ENCODE measurements at regions of chr5 and their contacts with region 1.

Region 1: GRCh38 chr5:135426102-135427082 is 20.8 kb downstream of the DCANP1 start:
- DNase-seq: no peak
- ATAC-seq: peak; percentile 89
- H3K4me3 Mint-ChIP-seq: no peak overlapping the region
- H3K27ac Mint-ChIP-seq: no peak overlapping the region
- H3K4me1 Mint-ChIP-seq: no peaks in the 10 kb centered on the region
- H3K27me3 Mint-ChIP-seq: peaks cover 24% of the 10 kb centered on the region
- CTCF ChIP-seq: peak; percentile 51

Region 2: DNA sequence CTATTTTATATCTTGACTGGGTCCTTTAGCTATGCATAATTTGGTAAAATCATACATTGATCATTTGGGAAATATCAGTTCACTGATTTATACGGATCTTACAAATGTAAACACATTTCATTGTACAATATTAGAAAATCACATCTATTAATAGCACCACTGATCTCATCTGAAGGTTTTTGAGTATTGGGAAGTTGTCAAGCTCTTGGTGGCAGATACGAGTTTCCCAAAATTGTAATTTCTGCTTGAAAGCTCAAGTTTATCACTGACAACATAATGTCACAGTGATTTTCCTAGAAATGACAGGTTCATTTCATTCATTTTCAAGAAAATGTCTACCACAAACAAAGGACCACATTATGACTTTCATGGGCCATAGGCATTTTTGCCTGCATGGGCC is 24.4 kb before region 1 on chr5:
- CTCF ChIA-PET with region 1: interaction called, 15 read pairs
- POLR2A ChIA-PET with region 1: no interaction called
- DNase-seq: no peak
- ATAC-seq: no peak
- H3K4me3 Mint-ChIP-seq: no peak overlapping the region
- H3K27ac Mint-ChIP-seq: no peak overlapping the region
- H3K4me1 Mint-ChIP-seq: peaks cover 51% of the 10 kb centered on the region
- H3K27me3 Mint-ChIP-seq: peaks cover 86% of the 10 kb centered on the region
- CTCF ChIP-seq: no peak

Region 3: GRCh38 chr5:135437796-135438560 is 11.6 kb after region 1 on chr5:
- CTCF ChIA-PET with region 1: interaction called, 32 read pairs
- POLR2A ChIA-PET with region 1: no interaction called
- DNase-seq: no peak
- ATAC-seq: no peak
- H3K4me3 Mint-ChIP-seq: no peak overlapping the region
- H3K27ac Mint-ChIP-seq: no peak overlapping the region
- H3K4me1 Mint-ChIP-seq: peaks cover 9% of the 10 kb centered on the region
- H3K27me3 Mint-ChIP-seq: no peaks in the 10 kb centered on the region
- CTCF ChIP-seq: no peak

Measured in WTC11 (cell line).